Naive thymus-derived CD4-positive, alpha-beta T cell (primary cell): ENCODE measurements at regions of chr20 and their contacts with region 1.

Region 1: GRCh38 chr20:653110-653589 is at the start of gene SRXN1:
- DNase-seq: peak in 8 of 9 donors; percentile 28 to 91 (median 34)
- ATAC-seq: peak; percentile 95
- H3K4me3 ChIP-seq: peak within 1 kb of the TSS; percentile 53
- H3K4me3 Mint-ChIP-seq: peak within 1 kb of the TSS; percentile 68 to 88 (median 75)
- H3K27ac ChIP-seq: no peak within 1 kb of the TSS
- H3K27ac Mint-ChIP-seq: peak within 1 kb of the TSS in 2 of 9 donors; percentile 13 to 81
- H3K4me1 ChIP-seq: peaks cover 12 to 14% of the 10 kb centered on the region in 2 donors
- H3K4me1 Mint-ChIP-seq: peaks cover 0 to 33% (median 17%) of the 10 kb centered on the region in 7 donors
- H3K27me3 ChIP-seq: no peaks in the 10 kb centered on the region
- H3K27me3 Mint-ChIP-seq: peaks cover 14 to 35% (median 30%) of the 10 kb centered on the region in 5 donors
- total RNA-seq, gene SRXN1: 0.61 to 14.8 (median 1.0) TPM

Region 2: GRCh38 chr20:483813-484644 is 169.1 kb before region 1 on chr20:
- CTCF ChIA-PET with region 1: no interaction called
- POLR2A ChIA-PET with region 1: no interaction called
- intact Hi-C with region 1: loop called in 1 of 2 experiments (anchors 10 kb)
- DNase-seq: no peak
- ATAC-seq: no peak
- H3K4me3 ChIP-seq: no peak overlapping the region
- H3K4me3 Mint-ChIP-seq: no peak overlapping the region
- H3K27ac ChIP-seq: no peak overlapping the region
- H3K27ac Mint-ChIP-seq: peak overlapping the region in 1 of 9 donors; percentile 25
- H3K4me1 ChIP-seq: peaks cover 0 to 6% of the 10 kb centered on the region in 2 donors
- H3K4me1 Mint-ChIP-seq: peaks cover 8 to 23% (median 20%) of the 10 kb centered on the region in 7 donors
- H3K27me3 ChIP-seq: no peaks in the 10 kb centered on the region
- H3K27me3 Mint-ChIP-seq: no peaks in the 10 kb centered on the region

Region 3: DNA sequence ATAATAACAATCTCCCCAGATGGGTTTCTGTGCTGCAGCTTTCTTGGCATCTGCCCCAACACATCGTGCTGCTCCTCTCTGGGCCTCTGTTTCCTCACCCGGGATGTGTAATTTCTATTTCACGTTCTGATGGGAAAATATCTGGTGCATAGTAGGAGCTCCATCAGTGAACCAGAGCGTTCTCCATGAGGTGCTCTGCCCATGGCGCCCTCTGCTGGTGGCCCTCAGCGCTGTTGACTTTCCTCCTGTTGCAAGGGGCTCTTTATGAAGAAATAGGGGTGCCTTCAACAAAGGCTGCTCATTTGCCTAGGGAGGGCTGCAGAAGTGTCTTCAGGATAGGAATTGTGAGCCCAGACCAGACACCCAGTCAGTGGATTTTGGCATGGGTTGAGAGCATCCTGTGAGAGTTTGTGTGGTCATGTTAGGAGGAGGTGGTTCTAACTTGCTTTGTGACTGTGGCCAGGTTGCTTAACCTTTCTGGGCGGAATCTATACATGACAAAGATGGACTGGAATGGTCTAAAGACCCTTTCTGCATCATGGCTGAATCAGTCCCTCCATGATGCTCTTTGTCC is 14.3 kb after region 1 on chr20:
- CTCF ChIA-PET with region 1: no interaction called
- POLR2A ChIA-PET with region 1: no interaction called
- intact Hi-C with region 1: loop called in 1 of 2 experiments (anchors 2 kb)
- DNase-seq: peak in 2 of 9 donors; percentile 21 to 69
- ATAC-seq: peak; percentile 55
- H3K4me3 ChIP-seq: no peak overlapping the region
- H3K4me3 Mint-ChIP-seq: no peak overlapping the region
- H3K27ac ChIP-seq: no peak overlapping the region
- H3K27ac Mint-ChIP-seq: no peak overlapping the region
- H3K4me1 ChIP-seq: no peaks in the 10 kb centered on the region
- H3K4me1 Mint-ChIP-seq: peaks cover 0 to 13% (median 0%) of the 10 kb centered on the region in 7 donors
- H3K27me3 ChIP-seq: peaks cover 0 to 6% of the 10 kb centered on the region in 2 donors
- H3K27me3 Mint-ChIP-seq: peaks cover 60 to 73% (median 65%) of the 10 kb centered on the region in 5 donors

Region 4: GRCh38 chr20:844473-845225 is 191.5 kb after region 1 on chr20:
- CTCF ChIA-PET with region 1: no interaction called
- POLR2A ChIA-PET with region 1: no interaction called
- intact Hi-C with region 1: loop called in 1 of 2 experiments (anchors 5 kb)
- DNase-seq: peak; percentile 55 to 95 (median 83)
- ATAC-seq: peak; percentile 98
- H3K4me3 ChIP-seq: peak overlapping the region; percentile 75
- H3K4me3 Mint-ChIP-seq: peak overlapping the region; percentile 88 to 97 (median 94)
- H3K27ac ChIP-seq: peak overlapping the region; percentile 70
- H3K27ac Mint-ChIP-seq: peak overlapping the region in 8 of 9 donors; percentile 70 to 93 (median 86)
- H3K4me1 ChIP-seq: peaks cover 40 to 45% of the 10 kb centered on the region in 2 donors
- H3K4me1 Mint-ChIP-seq: peaks cover 30 to 58% (median 52%) of the 10 kb centered on the region in 7 donors
- H3K27me3 ChIP-seq: no peaks in the 10 kb centered on the region
- H3K27me3 Mint-ChIP-seq: no peaks in the 10 kb centered on the region